Mammary epithelial cell (primary cell): ENCODE measurements at regions of chr6 and their contacts with region 1.

Region 1: GRCh38 chr6:105474234-105474633 is 71.4 kb upstream of the PREP start:
- DNase-seq: no peak
- H3K4me3 ChIP-seq: no peak overlapping the region
- H3K27ac ChIP-seq: no peak overlapping the region
- H3K4me1 ChIP-seq: no peaks in the 10 kb centered on the region
- H3K27me3 ChIP-seq: no peaks in the 10 kb centered on the region
- CTCF ChIP-seq: no peak

Region 2: DNA sequence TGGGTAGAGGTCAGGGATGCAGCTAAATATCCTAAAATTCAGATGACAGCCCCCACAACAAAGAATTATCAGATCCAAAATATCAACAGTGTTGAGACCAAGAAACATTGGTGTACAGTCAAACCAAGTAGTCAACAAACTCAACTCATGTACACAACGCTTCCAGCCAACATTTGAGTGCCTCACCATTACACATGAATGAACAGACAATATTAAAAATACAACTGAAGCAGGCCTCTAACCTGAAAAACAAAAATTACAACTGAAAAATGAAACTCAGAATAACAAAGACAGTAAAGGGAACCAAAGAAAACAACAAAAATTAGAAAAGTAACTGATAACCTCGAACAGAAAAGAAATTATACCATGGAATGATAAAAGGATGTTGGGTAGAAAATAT is 660.7 kb before region 1 on chr6:
- CTCF ChIA-PET with region 1: no interaction called
- dilution Hi-C with region 1: no loop called
- in situ Hi-C with region 1: no loop called
- intact Hi-C with region 1: no loop called
- DNase-seq: no peak
- H3K4me3 ChIP-seq: no peak overlapping the region
- H3K27ac ChIP-seq: no peak overlapping the region
- H3K4me1 ChIP-seq: no peaks in the 10 kb centered on the region
- H3K27me3 ChIP-seq: no peaks in the 10 kb centered on the region
- CTCF ChIP-seq: no peak

Region 3: DNA sequence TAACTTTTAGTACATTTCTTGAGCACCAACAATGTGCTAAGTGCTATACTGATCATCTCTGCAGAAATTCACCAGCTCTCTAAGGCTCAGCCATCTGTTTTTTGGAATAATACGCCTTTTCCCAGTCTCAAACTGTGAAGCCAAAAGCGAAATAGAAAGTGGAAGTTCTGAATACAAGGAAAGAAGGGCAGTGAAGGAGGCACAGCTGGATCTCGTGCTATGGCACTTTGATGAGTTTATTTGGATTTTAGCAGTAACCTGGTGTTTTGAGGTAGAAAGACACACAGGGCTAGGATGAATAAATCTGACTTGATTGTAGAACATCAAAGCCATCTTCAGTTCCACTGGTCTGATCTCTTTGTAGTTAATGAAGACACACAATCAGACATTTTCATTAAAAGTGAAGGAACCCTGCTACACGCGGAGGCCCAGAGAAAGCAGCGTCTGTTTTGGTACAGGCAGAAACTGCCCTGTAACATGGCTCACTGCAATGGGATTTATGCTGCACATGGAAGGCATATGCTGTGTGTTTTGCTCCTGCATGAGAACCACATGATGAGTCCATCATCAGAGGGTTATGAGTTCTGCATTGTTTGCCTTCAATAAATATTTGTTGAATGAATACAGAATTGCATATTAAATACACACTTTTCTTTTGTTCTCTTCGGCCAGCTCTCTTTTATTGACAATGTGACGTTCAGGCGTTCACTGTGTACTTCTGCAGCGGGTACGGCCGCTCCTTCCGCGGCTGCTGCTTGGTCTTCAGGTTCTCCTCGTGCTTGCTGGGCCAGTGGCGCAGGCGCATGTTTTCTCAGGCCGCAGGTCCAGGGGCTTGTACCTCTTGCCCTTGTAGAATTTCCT is 172.2 kb before region 1 on chr6:
- CTCF ChIA-PET with region 1: no interaction called
- dilution Hi-C with region 1: no loop called
- in situ Hi-C with region 1: no loop called
- intact Hi-C with region 1: no loop called
- DNase-seq: no peak
- H3K4me3 ChIP-seq: no peak overlapping the region
- H3K27ac ChIP-seq: no peak overlapping the region
- H3K4me1 ChIP-seq: no peaks in the 10 kb centered on the region
- H3K27me3 ChIP-seq: no peaks in the 10 kb centered on the region
- CTCF ChIP-seq: no peak

Region 4: DNA sequence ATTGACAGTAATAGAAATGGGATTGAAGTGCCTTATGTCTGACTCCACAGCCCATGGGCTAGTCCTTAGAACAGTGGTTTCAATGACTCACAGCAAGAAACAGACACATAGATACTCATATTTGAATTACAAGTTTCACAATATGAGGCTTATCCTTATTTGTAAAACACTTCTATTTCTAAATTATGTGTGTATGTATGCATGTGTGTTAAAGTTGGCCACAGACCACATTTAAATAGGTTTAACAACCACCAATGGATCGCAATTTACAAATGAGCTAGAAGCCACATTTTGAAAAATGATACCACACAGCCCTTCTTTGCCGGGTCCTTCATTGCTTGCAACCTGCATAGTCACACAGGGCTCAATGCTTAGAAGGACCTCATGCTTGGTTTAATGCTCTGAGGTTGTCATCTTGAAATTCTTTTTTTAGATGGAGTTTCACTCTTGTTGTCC is 86.4 kb after region 1 on chr6:
- CTCF ChIA-PET with region 1: no interaction called
- dilution Hi-C with region 1: no loop called
- in situ Hi-C with region 1: no loop called
- intact Hi-C with region 1: no loop called
- DNase-seq: peak; percentile 90
- H3K4me3 ChIP-seq: no peak overlapping the region
- H3K27ac ChIP-seq: peak overlapping the region; percentile 60
- H3K4me1 ChIP-seq: peaks cover 12% of the 10 kb centered on the region
- H3K27me3 ChIP-seq: no peaks in the 10 kb centered on the region
- CTCF ChIP-seq: no peak

Region 5: GRCh38 chr6:106178900-106179299 is 704.7 kb after region 1 on chr6:
- CTCF ChIA-PET with region 1: interaction called, 12 read pairs
- dilution Hi-C with region 1: no loop called
- in situ Hi-C with region 1: no loop called
- intact Hi-C with region 1: no loop called
- DNase-seq: no peak
- H3K4me3 ChIP-seq: no peak overlapping the region
- H3K27ac ChIP-seq: no peak overlapping the region
- H3K4me1 ChIP-seq: peaks cover 15% of the 10 kb centered on the region
- H3K27me3 ChIP-seq: no peaks in the 10 kb centered on the region
- CTCF ChIP-seq: no peak